Activated CD8-positive, alpha-beta memory T cell treated with anti-CD3 and anti-CD28 coated beads, Interleukin-2, amount 10 ng/mL, durations not matched to agents 7 days and 5 days (primary cell): ENCODE measurements at regions of chr19 and their contacts with region 1.

Region 1: DNA sequence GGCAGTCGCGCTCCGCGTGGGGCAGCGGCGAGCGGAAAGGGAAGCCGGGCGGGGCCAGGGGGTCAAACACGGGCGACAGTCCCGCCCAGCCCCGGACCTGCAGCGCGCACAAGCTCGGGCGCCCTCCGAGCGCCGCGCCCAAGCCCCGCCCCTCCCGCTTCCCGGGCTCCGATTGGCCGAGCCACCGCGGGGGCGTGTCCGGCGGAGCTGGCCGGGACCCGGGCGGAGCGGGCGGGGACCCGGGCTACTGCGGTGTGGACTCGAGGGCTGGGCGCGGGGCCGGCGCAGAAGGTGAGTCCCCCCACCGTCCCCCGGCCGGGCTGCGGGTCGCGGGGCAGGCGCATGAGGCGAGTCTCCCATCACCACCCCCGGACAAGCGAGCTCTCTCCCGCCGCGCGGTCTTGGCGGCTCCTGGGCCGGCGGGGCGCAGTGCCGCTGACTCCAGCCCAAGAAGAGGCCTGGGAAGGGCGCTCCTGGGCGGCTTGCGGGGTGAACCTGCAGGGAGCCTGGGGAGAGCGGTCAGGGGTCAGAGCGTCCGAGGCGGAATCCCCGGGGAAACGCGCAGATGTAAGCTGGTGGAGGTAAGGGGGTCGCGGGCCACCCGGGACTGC is at the start of gene PLEKHF1:
- DNase-seq: peak; percentile 91
- ATAC-seq: peak; percentile 86
- H3K4me3 Mint-ChIP-seq: peak within 1 kb of the TSS; percentile 85
- H3K27ac Mint-ChIP-seq: peak within 1 kb of the TSS; percentile 90
- H3K4me1 Mint-ChIP-seq: peaks cover 63% of the 10 kb centered on the region
- H3K27me3 Mint-ChIP-seq: no peaks in the 10 kb centered on the region
- total RNA-seq, gene PLEKHF1: 42.4 to 64.1 TPM

Region 2: GRCh38 chr19:29680447-29680846 is 15.1 kb after region 1 on chr19:
- CTCF ChIA-PET with region 1: interaction called, 85 read pairs
- DNase-seq: peak; percentile 95
- ATAC-seq: peak; percentile 89
- H3K4me3 Mint-ChIP-seq: peak overlapping the region; percentile 43
- H3K27ac Mint-ChIP-seq: peak overlapping the region; percentile 85
- H3K4me1 Mint-ChIP-seq: peaks cover 73% of the 10 kb centered on the region
- H3K27me3 Mint-ChIP-seq: no peaks in the 10 kb centered on the region

Region 3: DNA sequence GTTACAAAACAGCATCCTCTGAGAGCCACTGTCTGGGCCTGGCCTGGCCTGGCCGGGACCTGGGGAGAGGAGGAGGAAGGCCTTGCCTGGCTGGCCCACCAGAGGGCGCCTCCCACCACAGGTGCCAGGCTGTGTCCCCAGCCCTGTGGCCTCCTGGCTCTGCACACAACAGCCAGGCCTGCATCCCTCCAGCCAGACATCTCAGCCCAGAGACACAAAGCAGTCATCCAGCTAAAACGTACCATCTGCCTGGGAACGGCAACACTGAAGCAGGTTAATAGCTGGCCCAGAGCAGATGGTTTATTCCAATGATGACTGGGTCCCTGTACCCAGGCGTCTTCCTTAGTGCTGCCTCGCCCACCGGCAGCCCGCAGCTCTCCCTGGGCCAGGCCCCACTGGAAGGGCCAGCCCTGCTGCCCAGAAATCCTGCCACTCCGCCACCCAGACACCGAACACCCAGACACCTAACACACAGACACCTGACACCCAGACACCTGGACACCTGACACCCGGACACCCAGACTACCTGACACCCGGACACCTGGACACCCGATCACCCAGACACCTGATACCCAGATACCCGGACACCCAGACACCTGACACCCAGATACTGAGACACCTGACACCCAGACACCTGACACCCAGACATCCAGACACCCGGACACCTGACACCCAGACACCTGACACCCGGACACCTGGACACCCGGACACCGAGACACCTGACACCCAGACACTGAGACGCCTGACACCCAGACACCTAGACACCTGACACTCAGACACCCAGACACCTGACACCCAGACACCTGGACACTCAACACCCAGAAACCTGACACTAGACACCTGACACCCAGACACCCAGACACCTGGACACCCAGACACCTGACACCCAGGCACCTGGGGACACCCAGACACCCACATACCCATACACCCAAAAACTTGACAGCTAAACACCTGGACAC is 29.6 kb after region 1 on chr19:
- CTCF ChIA-PET with region 1: interaction called, 28 read pairs
- DNase-seq: peak; percentile 89
- ATAC-seq: peak; percentile 98
- H3K4me3 Mint-ChIP-seq: no peak overlapping the region
- H3K27ac Mint-ChIP-seq: peak overlapping the region; percentile 32
- H3K4me1 Mint-ChIP-seq: peaks cover 16% of the 10 kb centered on the region
- H3K27me3 Mint-ChIP-seq: no peaks in the 10 kb centered on the region

Region 4: GRCh38 chr19:29779921-29780320 is 114.6 kb after region 1 on chr19:
- CTCF ChIA-PET with region 1: no interaction called
- DNase-seq: no peak
- ATAC-seq: no peak
- H3K4me3 Mint-ChIP-seq: no peak overlapping the region
- H3K27ac Mint-ChIP-seq: no peak overlapping the region
- H3K4me1 Mint-ChIP-seq: no peaks in the 10 kb centered on the region
- H3K27me3 Mint-ChIP-seq: peaks cover 5% of the 10 kb centered on the region